ENCODE measurements at regions of chr4 and their contacts with region 1.

Region 1: GRCh38 chr4:114076899-114077570 is 97.6 kb upstream of the ARSJ start:
- DNase-seq: no peak
- H3K4me3 ChIP-seq: no peak overlapping the region
- H3K27me3 ChIP-seq: no peaks in the 10 kb centered on the region
- CTCF ChIP-seq: no peak

Region 2: DNA sequence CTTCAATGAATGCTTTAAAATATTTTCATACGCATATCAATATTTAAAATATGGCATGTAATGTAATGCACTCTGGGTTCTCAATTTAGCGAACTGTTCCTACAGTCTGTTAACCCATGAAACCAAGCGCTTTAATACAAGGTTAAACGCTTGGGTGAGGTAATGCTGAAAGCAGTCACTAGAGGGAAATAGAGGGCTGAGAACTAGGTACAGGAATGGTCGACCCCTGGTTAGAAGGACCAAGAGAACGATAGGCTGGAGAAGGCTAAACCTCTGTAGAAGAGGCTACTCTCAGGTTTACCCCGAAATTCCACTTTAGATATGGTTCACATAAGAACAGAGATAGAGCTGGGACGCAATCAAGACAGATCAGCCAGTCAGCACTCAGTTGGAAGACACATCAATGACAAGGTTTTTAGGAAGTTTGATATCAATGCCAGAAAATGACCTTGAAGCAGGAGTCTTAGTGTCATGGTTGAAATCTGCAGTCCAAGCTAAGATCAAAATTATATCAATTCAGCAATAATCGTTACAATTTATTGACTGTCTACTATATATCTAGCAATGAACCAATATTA is 124.5 kb before region 1 on chr4:
- CTCF ChIA-PET with region 1: interaction called, 14 read pairs
- POLR2A ChIA-PET with region 1: no interaction called
- DNase-seq: no peak
- H3K4me3 ChIP-seq: no peak overlapping the region
- H3K27me3 ChIP-seq: no peaks in the 10 kb centered on the region
- CTCF ChIP-seq: peak; percentile 64

Region 3: DNA sequence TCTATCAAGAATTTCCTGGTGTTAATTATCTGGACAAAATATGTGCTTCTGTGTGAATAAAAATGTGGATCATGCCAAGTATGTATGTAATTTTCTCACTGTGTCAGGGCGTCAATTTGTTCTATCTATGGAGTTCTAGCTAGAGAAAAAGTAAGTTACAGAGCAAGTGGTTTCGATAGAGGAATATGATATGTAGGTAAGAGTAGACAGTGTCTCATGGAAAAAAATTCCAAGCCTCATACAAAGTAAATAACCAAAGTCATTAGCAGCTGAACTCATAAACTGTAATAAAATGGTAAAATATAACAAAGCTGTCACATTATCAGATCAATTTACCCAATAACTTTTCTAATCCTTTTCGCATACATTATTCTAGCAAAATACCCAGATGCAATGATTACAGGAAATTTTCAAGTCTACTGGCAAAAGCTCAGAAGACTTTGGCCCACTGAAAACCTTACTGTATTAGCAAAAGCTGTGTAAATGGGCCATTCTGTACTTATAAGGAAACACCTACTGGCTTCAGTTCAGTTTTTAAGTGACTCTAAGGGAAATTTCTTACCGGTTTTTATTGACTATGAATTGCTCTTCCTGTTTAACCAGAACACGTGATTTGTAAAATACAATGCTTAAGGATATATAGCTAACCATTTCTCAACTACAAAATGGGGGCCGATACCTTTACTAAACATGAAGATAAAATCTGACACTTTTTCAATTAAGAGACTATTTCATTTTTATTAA is 23.4 kb after region 1 on chr4:
- CTCF ChIA-PET with region 1: no interaction called
- POLR2A ChIA-PET with region 1: no interaction called
- DNase-seq: no peak
- H3K4me3 ChIP-seq: no peak overlapping the region
- H3K27me3 ChIP-seq: no peaks in the 10 kb centered on the region
- CTCF ChIP-seq: no peak

Region 4: DNA sequence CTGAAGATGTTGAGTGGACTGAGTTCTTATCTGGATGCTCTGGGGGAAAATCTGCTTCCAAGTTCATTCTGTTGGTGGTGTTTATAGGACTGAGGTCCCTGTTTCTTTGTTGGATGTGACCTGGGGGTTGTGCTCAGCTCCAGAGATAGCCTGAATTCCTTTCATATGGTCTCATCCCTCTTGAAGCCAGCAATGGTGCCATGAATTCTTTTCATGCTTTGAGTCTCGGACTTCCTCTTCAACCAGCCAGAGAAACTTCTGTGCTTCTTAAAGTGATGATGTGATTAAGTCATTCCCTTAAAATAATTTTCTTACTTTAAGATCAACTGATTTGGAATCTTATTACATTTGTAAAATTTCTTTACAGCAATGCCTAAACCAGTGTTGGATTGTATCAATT is 287.8 kb after region 1 on chr4:
- CTCF ChIA-PET with region 1: no interaction called
- POLR2A ChIA-PET with region 1: no interaction called
- DNase-seq: peak; percentile 77
- H3K4me3 ChIP-seq: no peak overlapping the region
- H3K27me3 ChIP-seq: no peaks in the 10 kb centered on the region
- CTCF ChIP-seq: no peak

Measured in BJ (cell line).